ENCODE measurements at regions of chr12 and their contacts with region 1.

Region 1: GRCh38 chr12:9707864-9708808 is 24.8 kb downstream of the CLECL1 start:
- DNase-seq: peak; percentile 51 to 62 (median 58)
- ATAC-seq: peak; percentile 70
- H3K4me3 ChIP-seq: no peak overlapping the region
- H3K27ac ChIP-seq: no peak overlapping the region
- H3K4me1 ChIP-seq: peaks cover 5% of the 10 kb centered on the region
- H3K27me3 ChIP-seq: no peaks in the 10 kb centered on the region
- CTCF ChIP-seq: peak; percentile 46 to 83 (median 70)
- POLR2A ChIP-seq: no peak

Region 2: DNA sequence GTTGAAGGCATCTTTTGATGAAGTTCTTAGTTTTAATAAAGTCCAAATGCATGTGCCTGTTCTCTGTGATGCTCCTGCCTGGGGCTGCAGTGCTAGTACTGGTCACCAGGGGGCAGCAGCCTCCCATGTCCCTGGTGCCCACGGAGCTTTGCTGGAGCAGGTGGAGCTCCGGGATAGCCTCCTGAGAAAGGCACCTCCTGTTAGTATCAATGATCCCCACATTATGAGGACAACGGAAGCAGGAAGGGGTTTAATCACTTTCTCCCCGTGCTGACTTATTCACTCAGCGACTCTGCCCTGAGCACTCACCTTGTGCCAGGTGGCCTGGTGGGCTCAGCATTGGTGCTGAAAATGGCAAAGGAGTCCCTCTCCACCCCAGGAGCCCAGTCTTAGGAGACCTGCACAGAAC is 376.9 kb before region 1 on chr12:
- intact Hi-C with region 1: loop called (anchors 5 kb)
- DNase-seq: peak; percentile 71 to 80 (median 72)
- ATAC-seq: peak; percentile 90
- H3K4me3 ChIP-seq: no peak overlapping the region
- H3K27ac ChIP-seq: no peak overlapping the region
- H3K4me1 ChIP-seq: no peaks in the 10 kb centered on the region
- H3K27me3 ChIP-seq: no peaks in the 10 kb centered on the region
- CTCF ChIP-seq: peak; percentile 75 to 99 (median 89)
- POLR2A ChIP-seq: no peak

Region 3: DNA sequence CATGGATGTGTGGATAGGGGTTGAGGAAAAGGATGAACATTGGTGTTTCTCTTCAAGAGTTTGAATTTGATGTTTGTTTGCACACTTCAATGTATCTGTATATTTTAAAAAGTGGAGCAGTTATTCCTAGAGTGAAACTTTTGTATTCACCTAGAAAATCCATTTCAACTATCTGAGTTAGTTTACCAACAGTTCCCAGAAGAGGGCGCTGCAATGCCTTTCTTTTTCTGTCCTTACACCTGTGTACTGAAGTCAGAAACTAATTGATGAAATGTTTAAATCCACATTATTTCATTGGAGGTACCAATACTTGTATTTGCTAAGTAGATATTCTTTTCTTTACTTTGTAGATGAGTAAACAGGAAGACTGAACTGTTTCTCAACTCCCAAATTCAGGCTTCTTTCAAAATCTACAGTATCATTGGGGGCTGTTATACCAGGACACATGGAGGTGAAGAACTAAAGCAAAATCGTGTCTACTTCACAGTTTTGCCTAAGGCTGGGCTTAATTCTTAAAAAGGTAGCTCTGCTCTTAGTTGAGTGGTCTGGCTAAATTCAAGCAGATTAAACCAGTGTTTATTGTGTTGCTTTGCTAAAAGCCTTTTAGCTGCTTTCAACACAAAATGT is 73.8 kb before region 1 on chr12:
- intact Hi-C with region 1: loop called (anchors 10 kb)
- DNase-seq: peak; percentile 53 to 73 (median 66)
- ATAC-seq: peak; percentile 58
- H3K4me3 ChIP-seq: no peak overlapping the region
- H3K27ac ChIP-seq: no peak overlapping the region
- H3K4me1 ChIP-seq: no peaks in the 10 kb centered on the region
- H3K27me3 ChIP-seq: no peaks in the 10 kb centered on the region
- CTCF ChIP-seq: peak; percentile 13 to 70 (median 62)
- POLR2A ChIP-seq: no peak

Region 4: GRCh38 chr12:9864913-9865675 is 157.0 kb after region 1 on chr12:
- intact Hi-C with region 1: no loop called
- DNase-seq: no peak
- ATAC-seq: no peak
- H3K4me3 ChIP-seq: no peak overlapping the region
- H3K27ac ChIP-seq: no peak overlapping the region
- H3K4me1 ChIP-seq: no peaks in the 10 kb centered on the region
- H3K27me3 ChIP-seq: no peaks in the 10 kb centered on the region
- CTCF ChIP-seq: no peak
- POLR2A ChIP-seq: no peak

Measured in body of pancreas (tissue), 4 donors.